ENCODE measurements at regions of chr19 and their contacts with region 1.

Region 1: DNA sequence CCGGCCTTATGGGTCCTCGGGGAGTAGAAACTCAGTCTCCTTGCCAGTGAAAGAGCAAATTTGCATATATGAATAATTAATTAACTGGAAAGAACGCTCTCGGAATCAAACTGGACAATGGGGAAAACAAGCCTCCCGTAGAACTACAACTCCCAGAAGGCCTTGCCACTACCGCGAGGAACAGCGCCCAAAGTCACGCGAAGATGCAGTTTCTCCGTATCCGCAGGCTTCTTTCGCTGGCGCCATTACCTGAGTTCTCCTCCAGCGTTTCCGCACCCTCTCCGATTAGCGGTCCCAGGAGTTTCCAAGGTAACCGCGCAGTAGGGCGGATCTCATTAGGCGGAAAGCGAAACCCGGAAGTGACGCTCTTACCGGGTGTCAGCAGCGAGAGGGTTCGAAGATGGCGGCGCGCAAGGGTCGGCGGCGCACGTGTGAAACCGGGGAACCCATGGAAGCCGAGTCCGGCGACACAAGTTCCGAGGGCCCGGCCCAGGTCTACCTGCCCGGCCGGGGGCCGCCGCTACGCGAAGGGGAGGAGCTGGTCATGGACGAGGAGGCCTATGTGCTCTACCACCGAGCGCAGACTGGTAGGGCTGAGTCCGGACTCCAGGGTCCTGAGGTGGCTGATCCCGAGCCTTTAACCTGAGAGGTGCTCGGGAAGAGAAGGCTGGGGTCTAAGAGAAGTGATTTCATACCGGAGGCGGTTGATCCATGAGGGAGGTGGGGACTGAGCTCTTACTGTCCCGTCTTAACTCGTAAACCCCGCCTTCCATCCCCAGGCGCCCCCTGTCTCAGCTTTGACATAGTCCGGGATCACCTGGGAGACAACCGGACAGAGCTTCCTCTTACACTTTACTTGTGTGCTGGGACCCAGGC is at the start of gene GRWD1:
- DNase-seq: peak; percentile 94 to 97
- H3K4me3 ChIP-seq: peak within 1 kb of the TSS; percentile 68
- H3K4me3 Mint-ChIP-seq: peak within 1 kb of the TSS; percentile 97
- H3K27ac Mint-ChIP-seq: peak within 1 kb of the TSS; percentile 99
- H3K4me1 ChIP-seq: peaks cover 10% of the 10 kb centered on the region
- H3K4me1 Mint-ChIP-seq: peaks cover 21% of the 10 kb centered on the region
- H3K27me3 ChIP-seq: no peaks in the 10 kb centered on the region
- H3K27me3 Mint-ChIP-seq: no peaks in the 10 kb centered on the region
- CTCF ChIP-seq: no peak
- total RNA-seq, gene GRWD1: 77.3 and 77.4 TPM in 2 replicates

Region 2: GRCh38 chr19:48398375-48399235 is 47.2 kb before region 1 on chr19:
- CTCF ChIA-PET with region 1: interaction called, 3 read pairs
- POLR2A ChIA-PET with region 1: no interaction called
- intact Hi-C with region 1: loop called (anchors 2 kb)
- DNase-seq: peak; percentile 93 to 95
- H3K4me3 ChIP-seq: peak overlapping the region; percentile 51
- H3K4me3 Mint-ChIP-seq: peak overlapping the region; percentile 83
- H3K27ac Mint-ChIP-seq: peak overlapping the region; percentile 67
- H3K4me1 ChIP-seq: peaks cover 35% of the 10 kb centered on the region
- H3K4me1 Mint-ChIP-seq: peaks cover 50% of the 10 kb centered on the region
- H3K27me3 ChIP-seq: no peaks in the 10 kb centered on the region
- H3K27me3 Mint-ChIP-seq: no peaks in the 10 kb centered on the region
- CTCF ChIP-seq: no peak

Region 3: DNA sequence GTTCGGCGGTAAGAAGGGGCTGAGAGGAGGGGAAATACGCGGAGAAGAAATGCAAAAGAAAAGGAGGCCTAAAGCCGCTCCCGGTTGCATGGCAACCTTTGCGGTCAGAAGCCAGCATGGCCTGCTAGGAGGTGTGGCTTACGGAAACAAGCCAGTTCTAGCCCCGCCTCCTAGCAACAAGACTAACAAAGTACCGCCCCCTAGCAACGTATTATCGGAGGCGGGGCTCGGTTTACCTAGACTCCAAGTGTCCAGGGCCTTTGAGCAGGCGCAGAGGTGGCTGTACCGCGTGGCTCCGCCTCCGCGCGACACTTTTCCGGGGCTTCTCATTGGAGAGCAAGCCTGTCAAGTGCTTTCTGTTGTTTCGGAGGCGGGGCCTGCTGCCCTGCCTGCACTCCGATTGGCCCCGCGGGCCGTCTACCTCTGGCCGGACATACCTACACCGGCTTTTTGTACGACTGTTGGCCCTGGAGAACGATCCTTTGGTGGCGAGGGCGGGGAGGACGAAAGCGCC is 23.0 kb after region 1 on chr19:
- CTCF ChIA-PET with region 1: no interaction called
- POLR2A ChIA-PET with region 1: interaction called, 5 read pairs
- intact Hi-C with region 1: loop called (anchors 1 kb)
- DNase-seq: peak; percentile 99 to 100
- H3K4me3 ChIP-seq: peak overlapping the region; percentile 65
- H3K4me3 Mint-ChIP-seq: peak overlapping the region; percentile 93
- H3K27ac Mint-ChIP-seq: peak overlapping the region; percentile 98
- H3K4me1 ChIP-seq: peaks cover 11% of the 10 kb centered on the region; the same call in 1 of the 2 replicates
- H3K4me1 Mint-ChIP-seq: peaks cover 7% of the 10 kb centered on the region
- H3K27me3 ChIP-seq: no peaks in the 10 kb centered on the region
- H3K27me3 Mint-ChIP-seq: no peaks in the 10 kb centered on the region
- CTCF ChIP-seq: no peak

Region 4: DNA sequence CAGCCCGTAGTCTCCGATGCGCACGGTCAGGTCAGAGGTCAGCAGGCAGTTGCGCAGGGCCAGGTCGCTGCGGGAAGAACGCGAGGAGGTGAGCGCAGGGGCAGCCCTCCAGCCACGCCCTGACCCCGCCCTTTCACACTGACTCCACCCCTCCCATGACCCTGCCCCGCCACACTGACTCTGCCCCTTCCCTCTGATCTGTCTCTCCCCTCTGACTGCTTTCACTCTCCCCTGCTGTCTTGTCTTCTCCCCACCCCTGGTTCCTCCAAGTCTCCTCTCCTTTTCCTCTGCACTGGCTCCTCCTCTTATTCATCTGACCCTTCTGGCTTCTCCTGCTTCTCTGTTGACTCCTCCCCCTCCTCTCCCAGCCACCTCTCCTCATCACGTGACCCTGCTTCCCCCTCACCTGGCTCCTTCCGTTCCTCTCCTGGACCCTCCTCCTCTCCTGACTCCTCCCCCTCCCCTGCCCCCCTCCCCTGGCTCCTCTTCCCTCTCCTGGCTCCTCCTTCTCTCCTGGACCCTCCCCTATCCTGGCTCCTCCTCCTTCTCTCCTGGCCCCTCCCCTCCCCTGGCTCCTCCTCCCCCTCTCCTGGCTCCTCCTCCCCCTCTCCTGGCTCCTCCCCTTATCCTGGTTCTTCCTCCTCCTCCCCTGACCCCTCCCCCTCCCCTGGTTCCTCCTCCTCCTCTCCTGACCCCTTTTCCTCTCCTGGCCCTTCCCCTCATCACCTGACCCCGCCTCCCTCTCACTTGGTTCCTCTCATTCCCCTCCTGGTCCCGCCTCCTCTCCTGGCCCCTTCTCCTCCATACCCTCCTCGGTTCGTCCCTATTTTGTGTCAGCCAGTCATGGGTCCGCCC is 55.9 kb after region 1 on chr19:
- CTCF ChIA-PET with region 1: no interaction called
- POLR2A ChIA-PET with region 1: interaction called, 3 read pairs
- intact Hi-C with region 1: loop called (anchors 2 kb)
- DNase-seq: peak; percentile 99 to 100
- H3K4me3 ChIP-seq: peak overlapping the region; percentile 57
- H3K4me3 Mint-ChIP-seq: peak overlapping the region; percentile 80
- H3K27ac Mint-ChIP-seq: peak overlapping the region; percentile 87
- H3K4me1 ChIP-seq: peaks cover 15% of the 10 kb centered on the region
- H3K4me1 Mint-ChIP-seq: peaks cover 22% of the 10 kb centered on the region
- H3K27me3 ChIP-seq: no peaks in the 10 kb centered on the region
- H3K27me3 Mint-ChIP-seq: no peaks in the 10 kb centered on the region
- CTCF ChIP-seq: no peak

Region 5: DNA sequence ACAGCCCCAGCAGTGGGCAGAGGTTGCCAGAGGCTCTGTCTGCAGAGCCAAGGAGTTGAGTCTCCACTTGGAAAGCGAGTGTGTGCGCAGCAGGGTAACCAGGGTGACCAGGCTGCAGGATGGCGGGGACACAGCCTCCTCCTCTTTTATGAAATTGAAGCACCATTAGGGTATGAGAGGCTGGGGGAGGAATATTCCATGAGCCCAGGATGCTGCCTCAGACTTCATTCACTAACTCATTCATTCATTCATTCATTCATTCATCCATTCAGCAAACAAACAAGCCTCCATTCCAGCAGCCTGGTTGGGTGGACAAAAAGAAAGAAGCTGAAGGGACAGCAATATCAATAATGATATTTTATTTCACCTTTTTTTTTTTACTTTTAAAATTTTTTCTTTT is 72.4 kb after region 1 on chr19:
- CTCF ChIA-PET with region 1: no interaction called
- POLR2A ChIA-PET with region 1: no interaction called
- intact Hi-C with region 1: no loop called
- DNase-seq: no peak
- H3K4me3 ChIP-seq: no peak overlapping the region
- H3K4me3 Mint-ChIP-seq: no peak overlapping the region
- H3K27ac Mint-ChIP-seq: no peak overlapping the region
- H3K4me1 ChIP-seq: peaks cover 7% of the 10 kb centered on the region
- H3K4me1 Mint-ChIP-seq: peaks cover 29% of the 10 kb centered on the region
- H3K27me3 ChIP-seq: no peaks in the 10 kb centered on the region
- H3K27me3 Mint-ChIP-seq: no peaks in the 10 kb centered on the region
- CTCF ChIP-seq: no peak

Region 6: GRCh38 chr19:48881741-48882657 is 436.2 kb after region 1 on chr19:
- CTCF ChIA-PET with region 1: no interaction called
- POLR2A ChIA-PET with region 1: no interaction called
- intact Hi-C with region 1: no loop called
- DNase-seq: peak; percentile 52 to 61
- H3K4me3 ChIP-seq: no peak overlapping the region
- H3K4me3 Mint-ChIP-seq: no peak overlapping the region
- H3K27ac Mint-ChIP-seq: no peak overlapping the region
- H3K4me1 ChIP-seq: peaks cover 22% of the 10 kb centered on the region
- H3K4me1 Mint-ChIP-seq: peaks cover 5% of the 10 kb centered on the region
- H3K27me3 ChIP-seq: no peaks in the 10 kb centered on the region
- H3K27me3 Mint-ChIP-seq: no peaks in the 10 kb centered on the region
- CTCF ChIP-seq: no peak

Measured in Caco-2 (cell line).